Brain microvascular endothelial cell (primary cell): ENCODE measurements at regions of chrX and their contacts with region 1.

Region 1: GRCh38 chrX:19739683-19740082 is 147.7 kb downstream of the SH3KBP1 start:
- DNase-seq: peak; percentile 66
- H3K4me3 ChIP-seq: no peak overlapping the region
- H3K27ac ChIP-seq: no peak overlapping the region
- H3K27me3 ChIP-seq: no peaks in the 10 kb centered on the region
- CTCF ChIP-seq: peak; percentile 81

Region 2: GRCh38 chrX:19649226-19649995 is 90.3 kb before region 1 on chrX:
- in situ Hi-C with region 1: no loop called
- DNase-seq: no peak
- H3K4me3 ChIP-seq: no peak overlapping the region
- H3K27ac ChIP-seq: no peak overlapping the region
- H3K27me3 ChIP-seq: no peaks in the 10 kb centered on the region
- CTCF ChIP-seq: no peak

Region 3: DNA sequence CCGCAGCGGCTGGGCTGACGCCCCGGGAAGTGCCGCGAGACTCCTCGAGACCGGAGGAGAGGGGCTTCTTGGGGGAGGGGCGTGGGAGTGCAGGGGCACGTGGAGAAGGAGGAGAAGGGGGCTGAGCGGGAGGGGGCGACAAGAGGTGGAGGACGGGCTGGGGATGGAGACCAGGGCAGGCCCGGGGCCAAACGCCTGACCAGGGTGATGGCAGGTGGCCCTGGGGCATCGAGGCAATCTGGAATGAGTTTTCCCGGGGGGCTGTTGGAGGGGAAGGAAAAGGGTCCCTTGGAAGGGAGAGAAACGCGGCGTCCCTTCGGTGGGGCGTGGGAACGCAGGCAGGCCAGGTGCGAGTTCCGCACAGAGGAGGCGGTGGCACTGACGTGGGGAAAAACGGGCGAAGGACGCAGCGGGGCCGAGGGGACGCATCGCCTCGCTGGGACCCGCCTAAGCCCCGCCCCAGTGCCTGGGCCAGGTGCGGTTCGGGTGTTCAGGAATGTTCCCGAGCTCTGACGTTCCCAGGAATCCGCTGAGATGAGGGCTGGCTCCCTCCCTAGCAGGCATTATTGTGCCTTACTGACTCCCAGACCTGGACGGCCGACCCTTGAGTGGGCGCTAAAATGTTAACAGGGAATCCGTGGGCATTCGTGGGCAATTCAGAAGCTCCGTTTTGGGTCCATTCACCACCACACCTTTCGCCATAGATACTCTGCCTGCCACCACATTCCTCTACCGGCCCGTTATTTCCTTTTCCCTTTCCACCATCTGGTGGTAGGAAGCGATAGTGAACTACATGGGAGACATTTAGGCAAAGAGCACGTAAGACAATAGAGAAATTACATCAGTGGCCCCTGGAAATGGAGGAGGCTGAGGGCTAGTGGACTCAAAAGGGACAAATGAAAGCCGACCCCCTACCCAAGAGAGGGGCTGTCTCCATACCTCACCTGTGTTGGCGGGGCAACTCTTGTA is 148.5 kb after region 1 on chrX:
- in situ Hi-C with region 1: loop called (anchors 25 kb)
- DNase-seq: peak; percentile 48
- H3K4me3 ChIP-seq: peak overlapping the region; percentile 58
- H3K27ac ChIP-seq: peak overlapping the region; percentile 65
- H3K27me3 ChIP-seq: no peaks in the 10 kb centered on the region
- CTCF ChIP-seq: peak; percentile 66